PC-3 (cell line): ENCODE measurements at regions of chr16 and their contacts with region 1.

Region 1: DNA sequence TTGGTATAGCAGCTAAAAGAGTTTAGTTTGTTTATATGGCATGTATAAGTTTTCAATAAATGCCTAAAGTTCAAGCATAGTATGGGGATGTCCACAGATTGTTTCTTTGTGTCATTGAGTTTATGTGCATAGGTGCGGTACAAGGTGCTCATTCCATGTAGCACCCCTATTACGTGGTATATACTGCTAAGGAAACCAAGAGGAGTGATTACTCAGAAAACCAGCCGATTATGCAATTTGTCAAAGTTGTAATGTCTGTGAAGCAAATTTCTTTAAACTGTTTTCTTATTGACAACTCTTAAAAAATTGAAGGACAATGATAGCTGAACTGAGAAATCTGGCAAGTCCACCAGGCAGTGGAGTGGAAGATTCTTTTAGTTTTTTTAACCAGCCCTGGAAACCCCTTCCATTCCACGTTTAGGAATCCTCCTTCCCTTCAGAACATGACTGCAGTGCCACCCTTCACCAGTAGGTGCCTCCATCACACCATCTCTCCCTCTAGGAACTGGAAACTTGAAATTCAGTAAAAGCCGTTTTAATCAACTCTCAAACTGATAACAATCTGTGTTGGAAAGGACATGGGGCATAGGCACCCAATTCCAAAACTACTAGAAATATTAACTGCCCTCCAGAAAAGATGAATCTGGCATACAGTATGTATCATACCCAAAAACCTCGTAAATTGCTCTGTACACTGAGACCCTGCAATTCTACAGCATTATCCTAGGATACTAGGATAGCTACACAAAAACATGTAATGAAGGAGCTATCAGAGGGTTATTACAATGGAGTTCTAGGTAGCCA is 43.5 kb downstream of the REXO5 start:
- DNase-seq: peak; percentile 74
- ATAC-seq: peak; percentile 36
- H3K4me3 ChIP-seq: no peak overlapping the region
- H3K27ac ChIP-seq: no peak overlapping the region
- H3K4me1 ChIP-seq: peaks cover 34% of the 10 kb centered on the region
- H3K27me3 ChIP-seq: no peaks in the 10 kb centered on the region
- CTCF ChIP-seq: peak; percentile 94

Region 2: GRCh38 chr16:20910781-20911321 is 61.1 kb after region 1 on chr16:
- CTCF ChIA-PET with region 1: no interaction called
- POLR2A ChIA-PET with region 1: interaction called, 6 read pairs
- intact Hi-C with region 1: loop called (anchors 2 kb)
- DNase-seq: peak; percentile 91
- ATAC-seq: peak; percentile 70
- H3K4me3 ChIP-seq: peak overlapping the region; percentile 18; the same call in 1 of the 2 replicates
- H3K27ac ChIP-seq: peak overlapping the region; percentile 99
- H3K4me1 ChIP-seq: peaks cover 73% of the 10 kb centered on the region
- H3K27me3 ChIP-seq: no peaks in the 10 kb centered on the region
- CTCF ChIP-seq: no peak

Region 3: GRCh38 chr16:20956319-20956718 is 106.5 kb after region 1 on chr16:
- CTCF ChIA-PET with region 1: no interaction called
- POLR2A ChIA-PET with region 1: no interaction called
- intact Hi-C with region 1: loop called (anchors 1 kb)
- DNase-seq: peak; percentile 30
- ATAC-seq: peak; percentile 67
- H3K4me3 ChIP-seq: no peak overlapping the region
- H3K27ac ChIP-seq: no peak overlapping the region
- H3K4me1 ChIP-seq: no peaks in the 10 kb centered on the region
- H3K27me3 ChIP-seq: no peaks in the 10 kb centered on the region
- CTCF ChIP-seq: 0 out of 2 replicates have a peak, but pooled peaks have one; percentile 22

Region 4: GRCh38 chr16:21088646-21089538 is 239.1 kb after region 1 on chr16:
- CTCF ChIA-PET with region 1: no interaction called
- POLR2A ChIA-PET with region 1: no interaction called
- intact Hi-C with region 1: loop called (anchors 2 kb)
- DNase-seq: peak; percentile 52
- ATAC-seq: peak; percentile 95
- H3K4me3 ChIP-seq: no peak overlapping the region; the same call in 1 of the 2 replicates
- H3K27ac ChIP-seq: peak overlapping the region; percentile 42
- H3K4me1 ChIP-seq: peaks cover 11% of the 10 kb centered on the region
- H3K27me3 ChIP-seq: no peaks in the 10 kb centered on the region
- CTCF ChIP-seq: no peak

Region 5: GRCh38 chr16:21158208-21159110 is 308.7 kb after region 1 on chr16 and contains the start of gene LDAF1:
- CTCF ChIA-PET with region 1: no interaction called
- POLR2A ChIA-PET with region 1: no interaction called
- intact Hi-C with region 1: loop called (anchors 2 kb)
- DNase-seq: peak; percentile 76
- ATAC-seq: peak; percentile 90
- H3K4me3 ChIP-seq: peak within 1 kb of the TSS; percentile 87
- H3K27ac ChIP-seq: peak within 1 kb of the TSS; percentile 36
- H3K4me1 ChIP-seq: peaks cover 39% of the 10 kb centered on the region
- H3K27me3 ChIP-seq: no peaks in the 10 kb centered on the region
- CTCF ChIP-seq: no peak
- total RNA-seq, gene LDAF1: 3.6 and 11.5 TPM in 2 replicates